Endothelial cell of umbilical vein (primary cell): ENCODE measurements at regions of chr3 and their contacts with region 1.

Region 1: GRCh38 chr3:194486540-194487288 is at the start of gene ATP13A3:
- DNase-seq: peak; percentile 87
- H3K4me3 ChIP-seq: peak within 1 kb of the TSS; percentile 14 to 81 (median 72)
- H3K27ac ChIP-seq: peak within 1 kb of the TSS; percentile 62
- H3K4me1 ChIP-seq: peaks cover 28% of the 10 kb centered on the region
- H3K27me3 ChIP-seq: no peaks in the 10 kb centered on the region
- CTCF ChIP-seq: no peak
- POLR2A ChIP-seq: peak; percentile 81
- total RNA-seq, gene ATP13A3: 56.8 and 59.0 TPM in 2 replicates

Region 2: DNA sequence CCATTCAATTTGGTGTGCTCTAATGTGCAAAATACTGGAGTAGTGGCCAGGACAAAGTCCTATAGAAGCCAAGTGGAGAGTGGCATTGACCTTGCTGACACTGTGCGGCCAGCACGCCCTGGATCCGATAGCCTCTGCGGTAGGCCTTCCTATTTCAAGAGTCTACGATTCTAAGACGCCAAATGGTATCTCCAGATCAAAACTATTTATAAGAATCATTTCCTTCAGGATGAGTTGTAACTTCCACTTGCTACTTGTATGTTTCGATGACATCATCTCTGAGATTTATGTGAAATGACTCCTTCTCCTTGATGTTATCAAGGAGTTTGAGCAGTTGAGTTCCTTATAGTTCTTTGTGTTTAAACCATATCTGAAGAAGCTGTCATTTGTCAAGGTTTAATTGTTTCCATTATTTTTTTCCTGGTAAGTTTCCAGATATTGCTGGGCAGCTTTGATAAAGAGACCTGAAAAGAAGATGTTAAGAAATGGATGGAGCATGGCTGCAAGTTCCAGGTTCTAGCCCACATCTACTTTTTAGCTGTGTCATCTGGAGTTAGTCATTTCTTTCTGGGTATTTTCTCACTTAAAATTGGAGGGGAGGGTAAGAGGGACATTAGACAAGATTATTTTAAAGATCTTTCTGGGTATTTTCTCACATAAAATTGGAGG is 74.7 kb after region 1 on chr3:
- CTCF ChIA-PET with region 1: no interaction called
- POLR2A ChIA-PET with region 1: no interaction called
- dilution Hi-C with region 1: no loop called
- intact Hi-C with region 1: loop called (anchors 1 kb)
- DNase-seq: peak; percentile 90
- H3K4me3 ChIP-seq: no peak overlapping the region
- H3K27ac ChIP-seq: peak overlapping the region; percentile 78
- H3K4me1 ChIP-seq: peaks cover 21% of the 10 kb centered on the region
- H3K27me3 ChIP-seq: peaks cover 5 to 9% of the 10 kb centered on the region in 2 experiments
- CTCF ChIP-seq: no peak
- POLR2A ChIP-seq: no peak

Region 3: DNA sequence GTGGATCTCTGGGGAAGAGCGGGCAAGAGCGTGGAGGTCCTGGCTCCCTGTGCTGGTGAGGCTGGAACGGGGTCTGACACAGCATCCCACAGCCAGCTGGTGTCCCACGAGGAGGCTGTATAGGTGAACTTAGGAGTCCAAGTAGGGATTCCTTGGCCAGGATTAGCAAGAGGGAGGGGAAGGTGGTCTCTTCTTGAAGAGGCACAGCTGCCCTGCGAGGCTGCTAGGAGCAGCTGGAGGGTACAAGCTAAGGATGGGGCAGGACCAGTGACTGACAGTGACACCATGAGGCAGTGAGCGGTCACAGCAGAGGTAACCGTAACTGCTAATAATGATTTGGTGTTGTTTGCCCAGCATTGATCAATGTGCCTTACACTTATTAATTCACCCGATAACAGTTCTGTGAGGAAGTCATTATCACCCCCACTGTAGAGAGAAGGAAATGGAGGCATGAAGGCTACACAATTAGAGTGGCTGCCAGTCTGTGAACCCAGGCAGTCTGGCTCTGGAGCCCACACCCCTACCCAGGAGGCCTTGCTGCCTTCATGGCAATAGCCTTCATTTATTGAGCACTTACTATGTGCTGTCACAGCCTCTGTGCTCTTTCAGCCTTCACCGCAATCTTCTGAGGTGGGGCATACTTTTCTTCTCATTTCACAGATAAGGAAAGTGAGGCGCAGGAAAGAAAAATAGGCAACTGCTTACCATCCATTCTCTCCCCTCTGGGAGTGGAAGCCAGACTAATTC is 87.2 kb after region 1 on chr3:
- CTCF ChIA-PET with region 1: interaction called, 23 read pairs
- POLR2A ChIA-PET with region 1: no interaction called
- dilution Hi-C with region 1: no loop called
- intact Hi-C with region 1: loop called (anchors 2 kb)
- DNase-seq: peak; percentile 54
- H3K4me3 ChIP-seq: no peak overlapping the region
- H3K27ac ChIP-seq: no peak overlapping the region
- H3K4me1 ChIP-seq: peaks cover 20% of the 10 kb centered on the region
- H3K27me3 ChIP-seq: no peaks in the 10 kb centered on the region
- CTCF ChIP-seq: peak; percentile 55 to 76
- POLR2A ChIP-seq: no peak

Region 4: DNA sequence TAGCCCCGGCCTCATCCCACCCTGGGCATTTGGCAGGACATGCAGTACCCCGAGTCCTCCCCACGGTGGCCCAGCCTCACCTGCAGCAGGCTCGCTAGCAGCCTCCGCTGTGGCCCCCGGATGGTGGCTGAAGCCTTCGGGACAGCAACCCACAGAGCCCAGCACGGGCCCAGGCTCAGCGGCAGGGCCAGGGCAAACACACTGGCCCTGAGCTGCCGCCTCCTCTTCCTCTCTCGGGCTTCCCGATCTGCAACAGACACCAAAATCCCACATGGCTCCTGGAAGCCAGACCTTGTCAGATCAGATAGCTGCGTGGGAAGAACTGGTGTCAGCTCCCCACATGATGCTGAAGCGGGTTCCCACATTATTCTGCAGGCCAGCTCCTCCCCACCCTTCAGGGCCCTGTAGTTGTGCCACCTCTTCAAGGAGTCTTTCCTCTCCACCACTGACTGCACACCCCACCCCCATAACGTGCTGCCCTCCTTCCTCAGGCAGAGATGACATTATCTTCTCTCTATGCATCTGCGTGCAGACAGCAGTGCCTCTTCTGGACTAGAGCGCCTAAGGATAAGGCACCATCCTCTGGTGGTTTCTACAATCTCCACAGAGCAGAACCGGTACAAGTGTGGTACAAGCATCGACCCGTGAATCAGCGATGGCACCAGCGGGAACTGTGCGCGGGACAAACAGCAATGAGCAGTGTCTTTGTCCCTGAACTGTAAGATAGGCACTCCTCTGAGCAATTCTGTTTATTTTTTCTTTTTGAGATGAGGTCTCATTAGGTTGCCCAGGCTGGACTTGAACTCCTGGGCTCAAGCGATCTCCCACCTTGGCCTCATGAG is 137.0 kb after region 1 on chr3:
- CTCF ChIA-PET with region 1: no interaction called
- POLR2A ChIA-PET with region 1: interaction called, 13 read pairs
- dilution Hi-C with region 1: no loop called
- intact Hi-C with region 1: no loop called
- DNase-seq: no peak
- H3K4me3 ChIP-seq: no peak overlapping the region
- H3K27ac ChIP-seq: no peak overlapping the region
- H3K4me1 ChIP-seq: no peaks in the 10 kb centered on the region
- H3K27me3 ChIP-seq: no peaks in the 10 kb centered on the region
- CTCF ChIP-seq: peak in 1 of 2 donors; percentile 4
- POLR2A ChIP-seq: no peak